MCF 10A (cell line): ENCODE measurements at regions of chr11 and their contacts with region 1.

Region 1: DNA sequence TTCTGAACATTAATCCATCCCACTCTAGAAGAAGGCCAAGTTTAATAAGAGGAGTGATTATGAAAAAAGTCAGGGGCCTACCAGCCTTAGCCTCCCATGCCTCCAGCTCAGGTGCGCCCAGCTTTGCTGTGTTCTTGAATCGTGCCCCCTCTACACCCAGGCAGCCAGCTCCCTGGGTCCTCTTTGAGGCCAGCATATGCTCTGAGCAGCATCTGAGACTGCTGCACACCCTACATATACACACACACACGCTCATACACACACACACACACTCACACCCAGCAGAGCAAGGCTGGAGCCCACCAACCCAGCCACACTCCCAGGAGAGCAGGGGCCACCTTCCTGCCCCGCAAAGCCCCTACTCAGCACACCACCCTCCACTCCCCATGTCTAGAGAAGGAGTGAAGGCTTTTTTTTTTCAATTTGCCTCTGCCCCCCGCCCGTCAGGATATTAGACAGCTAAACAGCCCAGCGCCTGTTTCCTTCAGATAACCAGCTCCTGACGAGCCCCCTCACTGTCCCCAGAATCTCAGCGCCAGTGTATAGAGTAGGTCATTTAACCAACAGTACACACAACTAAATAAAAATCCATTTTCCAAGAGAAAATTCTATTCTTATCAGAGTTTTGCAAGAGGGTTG is 121.6 kb downstream of the BUD13 start:
- DNase-seq: no peak
- H3K4me3 Mint-ChIP-seq: no peak overlapping the region
- H3K27ac Mint-ChIP-seq: no peak overlapping the region
- H3K4me1 Mint-ChIP-seq: no peaks in the 10 kb centered on the region
- H3K27me3 Mint-ChIP-seq: peaks cover 17% of the 10 kb centered on the region
- CTCF ChIP-seq: no peak

Region 2: GRCh38 chr11:115215694-115216617 is 1435.3 kb before region 1 on chr11:
- CTCF ChIA-PET with region 1: interaction called, 10 read pairs
- POLR2A ChIA-PET with region 1: no interaction called
- intact Hi-C with region 1: no loop called
- DNase-seq: peak; percentile 25
- H3K4me3 Mint-ChIP-seq: no peak overlapping the region
- H3K27ac Mint-ChIP-seq: no peak overlapping the region
- H3K4me1 Mint-ChIP-seq: no peaks in the 10 kb centered on the region
- H3K27me3 Mint-ChIP-seq: no peaks in the 10 kb centered on the region
- CTCF ChIP-seq: peak; percentile 18

Region 3: GRCh38 chr11:116631201-116631600 is 20.0 kb before region 1 on chr11:
- CTCF ChIA-PET with region 1: no interaction called
- POLR2A ChIA-PET with region 1: no interaction called
- intact Hi-C with region 1: no loop called
- DNase-seq: no peak
- H3K4me3 Mint-ChIP-seq: no peak overlapping the region
- H3K27ac Mint-ChIP-seq: no peak overlapping the region
- H3K4me1 Mint-ChIP-seq: no peaks in the 10 kb centered on the region
- H3K27me3 Mint-ChIP-seq: peaks cover 40% of the 10 kb centered on the region
- CTCF ChIP-seq: no peak